Naive thymus-derived CD4-positive, alpha-beta T cell (primary cell): ENCODE measurements at regions of chr2 and their contacts with region 1.

Region 1: DNA sequence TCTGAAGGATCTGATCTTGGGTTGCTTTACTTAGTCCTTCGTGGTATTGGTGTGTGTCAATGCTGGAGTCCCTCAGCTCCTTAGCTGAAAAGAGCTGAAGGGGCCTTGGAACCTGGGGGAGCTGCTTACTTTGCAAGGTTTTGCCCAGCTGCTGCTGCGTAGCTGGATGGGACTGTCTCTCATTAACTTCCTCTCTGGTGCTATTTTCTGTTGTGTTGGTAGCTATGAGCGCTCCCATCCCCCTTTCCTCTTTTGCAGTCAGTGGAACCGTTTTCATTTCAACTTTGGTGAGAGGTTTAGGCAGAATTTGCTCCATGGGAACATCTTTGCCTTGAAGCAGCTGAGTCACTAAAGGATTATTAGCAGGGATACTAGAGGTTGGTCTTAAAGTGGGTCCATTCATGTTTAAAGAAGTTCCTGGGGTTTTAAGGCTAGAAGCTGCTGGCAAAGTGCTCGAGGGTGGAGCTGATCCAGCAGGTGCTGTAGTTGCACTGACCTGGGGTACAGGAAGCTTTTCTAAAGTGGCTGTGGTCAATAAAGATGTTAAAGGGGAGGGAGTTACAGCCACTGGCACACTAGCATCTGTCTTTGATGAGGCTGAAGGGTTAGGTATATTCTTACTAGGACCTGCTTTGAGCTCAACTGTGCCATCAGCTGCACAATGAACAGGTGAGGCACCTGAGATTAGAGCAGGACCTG is 69.9 kb upstream of the DTNB start:
- DNase-seq: peak in 5 of 9 donors; percentile 10 to 44 (median 27)
- ATAC-seq: peak; percentile 66
- H3K4me3 ChIP-seq: no peak overlapping the region
- H3K4me3 Mint-ChIP-seq: peak overlapping the region; percentile 39 to 76 (median 66)
- H3K27ac ChIP-seq: peak overlapping the region; percentile 41
- H3K27ac Mint-ChIP-seq: peak overlapping the region; percentile 58 to 93 (median 84)
- H3K4me1 ChIP-seq: peaks cover 0 to 14% of the 10 kb centered on the region in 2 donors
- H3K4me1 Mint-ChIP-seq: peaks cover 19 to 42% (median 32%) of the 10 kb centered on the region in 7 donors
- H3K27me3 ChIP-seq: no peaks in the 10 kb centered on the region
- H3K27me3 Mint-ChIP-seq: no peaks in the 10 kb centered on the region

Region 2: GRCh38 chr2:25722224-25722623 is 21.1 kb before region 1 on chr2:
- CTCF ChIA-PET with region 1: no interaction called
- POLR2A ChIA-PET with region 1: no interaction called
- intact Hi-C with region 1: no loop called
- DNase-seq: no peak
- ATAC-seq: no peak
- H3K4me3 ChIP-seq: no peak overlapping the region
- H3K4me3 Mint-ChIP-seq: no peak overlapping the region
- H3K27ac ChIP-seq: no peak overlapping the region
- H3K27ac Mint-ChIP-seq: no peak overlapping the region
- H3K4me1 ChIP-seq: no peaks in the 10 kb centered on the region
- H3K4me1 Mint-ChIP-seq: peaks cover 0 to 11% (median 6%) of the 10 kb centered on the region in 7 donors
- H3K27me3 ChIP-seq: no peaks in the 10 kb centered on the region
- H3K27me3 Mint-ChIP-seq: peaks cover 0 to 7% (median 0%) of the 10 kb centered on the region in 5 donors

Region 3: DNA sequence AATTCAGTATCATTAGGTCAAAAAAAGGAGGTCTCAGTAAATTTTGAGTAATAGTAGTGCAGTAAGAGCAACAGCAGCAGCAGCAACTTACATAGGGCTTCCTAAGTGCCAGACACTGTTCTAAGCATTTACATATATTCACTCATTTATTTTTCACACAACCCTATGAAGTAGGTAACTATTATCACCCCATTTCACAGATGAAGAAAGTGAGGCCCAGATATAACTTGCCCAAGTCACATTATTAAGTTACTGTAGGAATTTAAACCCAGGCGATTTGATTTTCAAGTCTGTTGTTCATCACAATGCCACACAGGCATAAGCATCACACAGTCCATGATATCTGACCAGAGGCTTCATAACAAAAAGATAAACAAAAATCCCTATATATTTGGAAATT is 20.3 kb after region 1 on chr2:
- CTCF ChIA-PET with region 1: no interaction called
- POLR2A ChIA-PET with region 1: no interaction called
- intact Hi-C with region 1: loop called in 1 of 2 experiments (anchors 2 kb)
- DNase-seq: no peak
- ATAC-seq: no peak
- H3K4me3 ChIP-seq: no peak overlapping the region
- H3K4me3 Mint-ChIP-seq: no peak overlapping the region
- H3K27ac ChIP-seq: no peak overlapping the region
- H3K27ac Mint-ChIP-seq: peak overlapping the region in 1 of 9 donors; percentile 42
- H3K4me1 ChIP-seq: no peaks in the 10 kb centered on the region
- H3K4me1 Mint-ChIP-seq: peaks cover 8 to 39% (median 22%) of the 10 kb centered on the region in 7 donors
- H3K27me3 ChIP-seq: no peaks in the 10 kb centered on the region
- H3K27me3 Mint-ChIP-seq: no peaks in the 10 kb centered on the region